Sciatic nerve (tissue), 2 donors: ENCODE measurements at regions of chr11 and their contacts with region 1.

Region 1: GRCh38 chr11:95033051-95033450 is 8.0 kb downstream of the KDM4E start:
- DNase-seq: no peak
- ATAC-seq: no peak

Region 2: DNA sequence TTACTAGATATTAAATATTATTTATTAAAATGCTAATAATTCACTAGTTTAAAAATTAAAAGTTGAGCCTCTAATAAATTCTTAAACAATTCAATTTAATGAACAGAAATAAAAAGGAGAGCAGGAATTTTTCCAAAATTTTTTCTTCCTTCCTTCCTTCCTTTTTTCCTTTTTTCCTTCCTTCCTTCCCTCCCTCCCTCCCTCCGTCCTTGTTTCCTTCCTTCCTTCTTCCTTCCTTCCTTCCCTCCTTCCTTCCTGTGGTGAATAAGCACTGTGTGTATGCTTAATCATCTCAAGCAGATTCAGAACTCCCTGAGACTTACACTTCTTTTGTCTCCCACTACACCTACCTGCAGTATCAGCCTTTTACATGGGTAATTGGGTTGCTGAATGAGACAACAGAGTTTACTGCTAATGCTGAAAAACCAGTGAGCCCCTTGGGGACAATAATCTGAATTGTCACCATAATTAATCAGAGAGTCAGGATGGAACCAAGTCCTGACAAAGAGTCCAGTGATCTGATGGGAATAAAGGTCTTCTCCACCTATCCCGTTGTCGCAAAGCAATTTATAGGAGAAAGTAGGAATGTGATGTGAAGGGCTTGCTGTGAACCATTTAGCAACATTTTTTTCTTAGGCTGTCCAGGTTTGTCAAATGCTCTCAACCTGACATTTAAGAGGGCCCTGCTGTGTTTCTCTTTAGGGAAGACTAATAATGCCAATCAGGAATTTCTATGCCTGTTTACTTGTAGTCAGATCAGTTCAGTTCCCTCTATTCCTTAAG is 1429.6 kb before region 1 on chr11:
- intact Hi-C with region 1: no loop called
- DNase-seq: no peak
- ATAC-seq: no peak

Region 3: DNA sequence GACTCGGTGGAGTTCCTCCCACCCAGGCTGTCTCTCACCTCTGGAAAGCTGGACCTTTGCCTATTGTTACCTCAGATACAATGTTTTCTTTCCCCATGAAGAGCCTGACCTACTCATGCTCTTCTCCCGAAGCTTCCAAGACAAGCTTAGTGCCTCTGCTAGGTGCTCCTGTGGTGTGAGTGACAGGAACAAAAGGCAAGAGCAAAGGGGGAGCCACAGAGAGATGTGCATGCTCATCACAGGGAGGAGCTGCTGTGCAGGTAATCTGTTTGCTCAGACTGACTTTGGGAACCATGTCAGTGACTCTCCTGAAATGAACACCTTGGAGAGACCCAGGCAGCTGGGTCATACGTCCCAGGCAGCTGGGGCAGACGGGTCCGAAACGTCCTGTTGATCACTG is 1129.1 kb before region 1 on chr11:
- intact Hi-C with region 1: loop called (anchors 5 kb)
- DNase-seq: no peak
- ATAC-seq: no peak